Left cardiac atrium (tissue), 4 donors: ENCODE measurements at regions of chr1 and their contacts with region 1.

Region 1: DNA sequence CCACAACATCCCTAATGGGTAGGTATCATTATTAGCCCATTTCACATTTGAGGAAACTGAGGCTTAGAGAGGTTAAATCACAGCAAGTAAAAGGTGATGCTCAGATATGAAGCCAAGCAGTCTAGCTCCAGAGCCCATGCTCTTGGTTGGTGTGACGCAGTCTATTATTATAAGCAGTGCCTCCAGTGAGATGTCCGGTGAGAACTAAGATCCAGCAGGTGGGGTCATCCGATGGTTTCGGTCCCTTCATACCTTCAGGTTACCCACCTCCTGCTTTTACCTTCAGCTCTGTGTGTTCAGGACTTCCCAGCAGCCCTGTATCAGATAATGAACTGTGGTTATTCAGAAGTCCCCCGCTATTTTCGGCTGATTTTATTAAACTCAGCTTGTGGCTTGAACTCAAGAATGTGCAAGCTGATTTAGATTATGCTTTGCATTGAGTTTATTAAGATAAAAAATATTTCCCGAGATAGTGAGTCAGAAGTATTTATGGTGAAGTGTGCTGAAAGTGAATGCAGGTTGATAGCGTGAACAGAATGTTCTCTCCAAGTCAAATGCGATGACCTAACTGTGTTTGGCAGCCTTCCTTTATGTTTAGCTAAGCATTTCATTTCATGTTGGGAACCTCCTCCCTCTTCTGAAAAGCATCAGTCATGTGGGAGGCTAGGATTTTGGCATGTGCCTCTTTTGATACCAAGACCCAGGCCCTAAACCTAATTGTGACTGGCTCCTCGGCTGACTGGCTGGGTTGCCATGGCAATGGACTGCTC is 160.9 kb upstream of the UBE2U start:
- DNase-seq: peak; percentile 33
- ATAC-seq: peak; percentile 69 to 87

Region 2: GRCh38 chr1:63698001-63698838 is 344.3 kb before region 1 on chr1:
- intact Hi-C with region 1: loop called in 1 of 2 experiments (anchors 5 kb)
- DNase-seq: peak; percentile 71
- ATAC-seq: peak; percentile 87 to 90